ENCODE measurements at regions of chr20 and their contacts with region 1.

Region 1: GRCh38 chr20:63641792-63642544 is 11.3 kb downstream of the STMN3 start:
- DNase-seq: peak; percentile 92
- ATAC-seq: peak; percentile 76
- H3K4me3 Mint-ChIP-seq: peak overlapping the region; percentile 78
- H3K27ac Mint-ChIP-seq: peak overlapping the region; percentile 71
- H3K4me1 Mint-ChIP-seq: peaks cover 35% of the 10 kb centered on the region
- H3K27me3 Mint-ChIP-seq: no peaks in the 10 kb centered on the region
- CTCF ChIP-seq: no peak

Region 2: GRCh38 chr20:63553227-63553932 is 88.6 kb before region 1 on chr20:
- CTCF ChIA-PET with region 1: interaction called, 4 read pairs
- POLR2A ChIA-PET with region 1: interaction called, 13 read pairs
- intact Hi-C with region 1: loop called (anchors 1 kb)
- DNase-seq: peak; percentile 86
- ATAC-seq: peak; percentile 78
- H3K4me3 Mint-ChIP-seq: peak overlapping the region; percentile 84
- H3K27ac Mint-ChIP-seq: peak overlapping the region; percentile 82
- H3K4me1 Mint-ChIP-seq: peaks cover 50% of the 10 kb centered on the region
- H3K27me3 Mint-ChIP-seq: no peaks in the 10 kb centered on the region
- CTCF ChIP-seq: no peak

Region 3: DNA sequence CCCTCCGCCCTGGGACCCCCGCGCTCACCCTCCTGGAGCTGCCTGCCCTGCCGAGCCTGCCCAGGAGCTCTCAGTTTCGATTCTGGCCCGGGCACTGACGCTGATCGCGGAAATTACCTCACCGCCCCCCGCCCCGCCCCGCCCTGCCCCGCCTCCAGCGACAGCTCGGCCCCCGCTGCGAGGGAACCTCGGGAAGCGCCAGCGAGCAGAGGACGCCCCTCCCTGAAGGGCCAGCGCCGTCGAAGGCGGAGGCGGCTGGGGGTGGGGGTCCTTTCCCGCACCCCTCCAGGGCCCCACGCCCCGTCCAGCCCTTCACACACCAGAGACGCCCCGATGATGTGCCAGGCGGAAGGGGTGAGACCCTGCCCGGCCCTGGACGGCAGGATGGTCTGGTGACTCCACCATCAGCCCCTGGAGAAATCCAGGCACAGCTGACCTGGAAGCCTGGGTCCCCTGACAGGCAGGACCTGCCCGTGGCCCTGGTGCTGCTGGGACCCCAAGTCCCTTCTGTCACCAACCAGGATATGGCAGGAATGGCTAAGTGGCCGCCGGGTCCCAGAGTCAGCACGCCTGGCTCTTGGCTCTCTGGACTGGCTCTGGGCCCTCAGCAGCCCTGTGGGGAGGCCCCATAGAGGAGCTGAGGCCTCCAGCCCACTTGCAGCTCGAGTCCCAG is 67.7 kb before region 1 on chr20 and contains the start of gene HELZ2:
- CTCF ChIA-PET with region 1: no interaction called
- POLR2A ChIA-PET with region 1: interaction called, 16 read pairs
- intact Hi-C with region 1: no loop called
- DNase-seq: peak; percentile 55
- ATAC-seq: peak; percentile 95
- H3K4me3 Mint-ChIP-seq: peak within 1 kb of the TSS; percentile 83
- H3K27ac Mint-ChIP-seq: peak within 1 kb of the TSS; percentile 70
- H3K4me1 Mint-ChIP-seq: peaks cover 12% of the 10 kb centered on the region
- H3K27me3 Mint-ChIP-seq: peaks cover 2% of the 10 kb centered on the region
- CTCF ChIP-seq: no peak
- total RNA-seq, gene HELZ2: 25.4 and 28.9 TPM in 2 replicates

Region 4: DNA sequence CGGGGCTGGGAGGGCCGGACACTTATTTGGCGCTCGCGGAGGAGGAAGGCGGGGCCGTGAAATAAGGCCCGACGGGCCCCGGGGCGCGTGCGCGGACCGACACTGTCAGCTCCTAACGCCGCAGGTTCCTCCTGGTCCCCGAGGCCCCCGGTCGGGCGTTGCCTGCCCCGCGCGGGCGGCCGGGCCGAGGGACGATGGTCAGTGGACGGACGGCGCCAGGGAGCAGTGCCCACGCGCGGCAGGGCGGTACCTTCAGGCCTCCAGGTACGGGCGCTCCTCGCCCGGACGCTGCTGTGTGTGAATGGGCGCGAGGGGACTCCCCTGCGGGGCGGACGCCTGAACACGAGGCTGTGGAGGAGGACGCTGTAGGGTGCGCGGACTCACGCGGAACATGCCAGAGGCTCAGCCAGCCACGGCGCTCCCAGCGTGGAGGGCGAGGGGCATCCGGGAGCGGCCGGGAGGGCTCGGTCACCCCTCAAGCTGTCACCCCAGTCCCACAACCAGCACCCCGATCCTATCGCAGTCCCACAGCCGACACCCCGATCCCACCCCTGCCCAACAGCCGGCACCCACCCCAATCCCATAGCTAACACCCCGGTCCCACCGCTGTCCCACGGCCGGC is 14.7 kb before region 1 on chr20:
- CTCF ChIA-PET with region 1: interaction called, 16 read pairs
- POLR2A ChIA-PET with region 1: interaction called, 161 read pairs
- intact Hi-C with region 1: loop called (anchors 1 kb)
- DNase-seq: peak; percentile 97
- ATAC-seq: peak; percentile 77
- H3K4me3 Mint-ChIP-seq: peak overlapping the region; percentile 91
- H3K27ac Mint-ChIP-seq: peak overlapping the region; percentile 93
- H3K4me1 Mint-ChIP-seq: peaks cover 45% of the 10 kb centered on the region
- H3K27me3 Mint-ChIP-seq: no peaks in the 10 kb centered on the region
- CTCF ChIP-seq: no peak

Region 5: DNA sequence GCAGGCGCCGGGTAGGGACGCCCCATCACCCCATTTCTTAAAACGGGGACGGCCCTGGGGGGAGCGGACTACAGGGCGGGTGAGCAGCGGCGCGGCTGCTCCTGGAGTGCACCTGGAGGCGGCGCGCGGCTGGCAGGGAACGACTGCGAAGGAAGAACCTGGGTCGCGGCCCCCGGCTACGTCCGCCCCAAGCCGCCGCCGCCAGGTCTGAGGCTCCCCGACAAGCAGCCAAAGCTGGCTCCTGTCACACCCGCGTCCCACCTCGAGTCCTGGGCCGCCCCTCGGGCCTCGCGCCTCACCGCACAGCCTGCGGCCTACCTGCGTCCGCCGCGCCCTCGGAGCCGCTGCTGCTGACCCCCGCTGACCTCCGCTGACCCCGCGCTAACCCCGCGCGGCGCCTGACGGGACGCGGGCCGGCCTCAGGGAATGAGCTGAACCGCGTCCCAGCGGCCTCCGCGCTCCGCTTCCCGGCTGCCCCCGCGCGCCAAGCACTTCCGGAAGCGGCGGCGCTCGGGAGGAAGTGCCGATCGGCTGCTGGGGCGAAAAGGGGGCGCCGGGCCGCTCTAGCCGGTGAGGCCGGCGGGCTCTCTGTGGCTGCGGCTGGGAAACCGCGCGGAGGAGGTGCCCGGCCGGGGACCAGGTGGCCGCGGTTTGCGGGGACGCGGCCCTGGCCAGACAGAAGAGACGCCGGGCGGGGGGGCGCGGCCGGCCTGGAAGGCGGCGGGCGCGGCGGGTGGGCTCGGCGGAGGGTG is 65.8 kb after region 1 on chr20 and contains the starts of genes ARFRP1 and ZGPAT:
- CTCF ChIA-PET with region 1: interaction called, 4 read pairs
- POLR2A ChIA-PET with region 1: interaction called, 15 read pairs
- intact Hi-C with region 1: loop called (anchors 5 kb)
- DNase-seq: peak; percentile 91
- ATAC-seq: peak; percentile 94
- H3K4me3 Mint-ChIP-seq: peak within 1 kb of the TSS; percentile 87
- H3K27ac Mint-ChIP-seq: peak within 1 kb of the TSS; percentile 72
- H3K4me1 Mint-ChIP-seq: peaks cover 42% of the 10 kb centered on the region
- H3K27me3 Mint-ChIP-seq: no peaks in the 10 kb centered on the region
- CTCF ChIP-seq: no peak
- total RNA-seq, gene ARFRP1: 63.5 and 66.0 TPM in 2 replicates
- total RNA-seq, gene ZGPAT: 40.7 and 44.0 TPM in 2 replicates

Region 6: GRCh38 chr20:63955827-63956663 is 314.1 kb after region 1 on chr20 and contains the start of gene UCKL1:
- CTCF ChIA-PET with region 1: no interaction called
- POLR2A ChIA-PET with region 1: interaction called, 10 read pairs
- intact Hi-C with region 1: loop called (anchors 5 kb)
- DNase-seq: peak; percentile 87
- ATAC-seq: peak; percentile 78
- H3K4me3 Mint-ChIP-seq: peak within 1 kb of the TSS; percentile 87
- H3K27ac Mint-ChIP-seq: peak within 1 kb of the TSS; percentile 85
- H3K4me1 Mint-ChIP-seq: peaks cover 49% of the 10 kb centered on the region
- H3K27me3 Mint-ChIP-seq: no peaks in the 10 kb centered on the region
- CTCF ChIP-seq: no peak
- total RNA-seq, gene UCKL1: 43.6 and 49.7 TPM in 2 replicates

Measured in activated B cell treated with CpG ODN at 0.5 μM for 24 hours (primary cell).